ENCODE measurements at regions of chr11 and their contacts with region 1.

Region 1: GRCh38 chr11:11977206-11977938 is 31.1 kb downstream of the DKK3 start:
- DNase-seq: peak; percentile 80 to 84 (median 82)
- ATAC-seq: peak; percentile 14 to 48 (median 29)
- H3K4me3 ChIP-seq: no peak overlapping the region
- H3K27ac ChIP-seq: peak overlapping the region; percentile 61 to 97 (median 88)
- H3K4me1 ChIP-seq: peaks cover 29 to 100% (median 96%) of the 10 kb centered on the region in 12 donors
- H3K27me3 ChIP-seq: no peaks in the 10 kb centered on the region
- CTCF ChIP-seq: no peak
- POLR2A ChIP-seq: no peak

Region 2: DNA sequence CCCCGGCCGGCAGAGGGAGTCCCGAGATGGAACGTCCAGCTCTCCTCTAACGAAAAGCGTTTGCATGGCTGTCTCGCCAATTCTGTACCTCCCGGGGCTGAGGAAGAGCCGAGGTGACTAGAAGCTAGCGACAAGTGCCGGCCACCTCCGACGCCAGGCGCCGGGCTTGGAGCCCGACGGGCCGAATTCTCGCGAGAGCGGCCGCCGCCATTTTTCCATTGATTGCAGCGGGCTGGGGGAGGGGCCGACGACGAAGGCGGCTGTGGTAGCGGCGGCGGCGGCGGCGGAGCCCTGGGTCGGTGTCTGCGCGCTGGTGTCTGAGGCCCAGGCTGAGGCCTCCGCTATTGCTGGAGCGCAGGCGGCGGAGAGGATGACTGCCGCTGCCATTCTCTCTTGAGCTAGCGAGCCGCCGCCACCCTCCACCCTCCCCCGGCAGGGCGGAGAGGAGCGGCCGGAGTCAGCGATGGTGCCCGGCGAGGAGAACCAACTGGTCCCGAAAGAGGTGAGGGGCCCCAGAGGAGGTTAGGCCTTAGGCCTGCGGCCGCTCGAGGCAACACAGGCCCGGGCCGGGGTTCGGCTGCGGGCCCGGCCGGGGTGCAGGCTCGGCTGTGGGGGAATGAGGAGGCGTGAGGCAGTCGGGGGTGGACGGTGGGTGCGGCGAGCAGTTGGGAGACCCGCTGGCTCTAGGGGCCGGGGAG is 135.5 kb before region 1 on chr11 and contains the start of gene USP47:
- intact Hi-C with region 1: loop called in 1 of 10 experiments (anchors 5 kb)
- DNase-seq: peak; percentile 93 to 96 (median 95)
- ATAC-seq: peak; percentile 78 to 93 (median 92)
- H3K4me3 ChIP-seq: peak within 1 kb of the TSS; percentile 54 to 86 (median 77)
- H3K27ac ChIP-seq: peak within 1 kb of the TSS; percentile 87 to 99 (median 96)
- H3K4me1 ChIP-seq: peaks cover 0 to 51% (median 36%) of the 10 kb centered on the region in 12 donors
- H3K27me3 ChIP-seq: no peaks in the 10 kb centered on the region
- CTCF ChIP-seq: peak in 11 of 12 donors; percentile 33 to 77 (median 57)
- POLR2A ChIP-seq: peak in 1 of 2 donors; percentile 82
- total RNA-seq, gene USP47: 42.3 to 89.6 (median 54.3) TPM

Region 3: GRCh38 chr11:11946180-11946579 is 31.2 kb before region 1 on chr11:
- intact Hi-C with region 1: no loop called
- DNase-seq: no peak
- ATAC-seq: no peak
- H3K4me3 ChIP-seq: no peak overlapping the region
- H3K27ac ChIP-seq: peak overlapping the region in 11 of 12 donors; percentile 0 to 64 (median 44)
- H3K4me1 ChIP-seq: peaks cover 0 to 37% (median 5%) of the 10 kb centered on the region in 12 donors
- H3K27me3 ChIP-seq: no peaks in the 10 kb centered on the region
- CTCF ChIP-seq: no peak
- POLR2A ChIP-seq: no peak

Region 4: GRCh38 chr11:11993839-11994238 is 16.5 kb after region 1 on chr11:
- intact Hi-C with region 1: loop called in 2 of 10 experiments (anchors 2 kb)
- DNase-seq: peak in 3 of 5 donors; percentile 51 to 81 (median 69)
- ATAC-seq: peak; percentile 80 to 91 (median 86)
- H3K4me3 ChIP-seq: no peak overlapping the region
- H3K27ac ChIP-seq: peak overlapping the region; percentile 55 to 84 (median 76)
- H3K4me1 ChIP-seq: peaks cover 0 to 48% (median 26%) of the 10 kb centered on the region in 12 donors
- H3K27me3 ChIP-seq: no peaks in the 10 kb centered on the region
- CTCF ChIP-seq: no peak
- POLR2A ChIP-seq: no peak

Region 5: DNA sequence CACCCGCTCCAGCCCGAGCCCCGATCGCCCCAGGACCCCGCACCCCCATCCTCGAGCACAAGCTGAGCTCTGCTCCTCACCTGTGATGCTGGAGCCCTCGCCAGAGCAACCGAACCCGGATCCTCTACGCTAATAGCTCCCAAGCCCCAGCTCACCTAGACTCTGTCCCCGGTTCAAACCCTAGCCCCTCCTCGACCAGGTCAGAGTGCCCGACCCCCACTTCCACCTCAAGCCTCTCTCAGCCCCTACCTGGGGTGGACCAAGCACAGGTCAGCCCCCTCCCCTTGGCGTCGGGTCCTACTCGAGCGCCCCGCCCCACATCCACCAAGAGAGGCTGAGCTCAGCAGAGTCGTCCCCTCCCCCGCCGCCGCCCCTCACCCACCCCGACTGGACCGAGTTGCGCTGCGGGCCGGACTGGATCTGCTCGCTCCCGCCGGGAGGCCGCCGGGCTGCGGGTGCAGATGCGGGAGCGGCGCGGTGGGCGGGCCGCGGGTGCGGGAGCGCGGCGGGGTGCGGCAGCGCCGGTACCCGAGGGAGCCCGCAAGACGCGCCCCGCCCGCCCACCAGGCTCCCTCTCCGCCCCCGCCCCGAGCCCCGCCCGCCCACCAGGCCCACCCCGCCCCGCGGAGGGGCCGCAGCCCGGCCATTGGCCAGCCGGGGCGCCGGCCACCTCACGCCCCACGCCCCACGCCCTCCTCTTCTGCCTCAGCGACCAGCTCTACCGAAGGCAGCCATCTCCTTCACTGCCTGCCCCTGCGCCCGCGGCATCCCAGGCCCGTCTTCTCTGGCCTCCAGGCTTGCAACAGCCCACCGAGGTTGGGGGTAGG is 31.6 kb after region 1 on chr11:
- intact Hi-C with region 1: loop called in 3 of 10 experiments (anchors 5 kb)
- DNase-seq: peak; percentile 60 to 81 (median 69)
- ATAC-seq: peak; percentile 69 to 82 (median 74)
- H3K4me3 ChIP-seq: peak overlapping the region; percentile 54 to 89 (median 72)
- H3K27ac ChIP-seq: peak overlapping the region; percentile 12 to 89 (median 82)
- H3K4me1 ChIP-seq: peaks cover 0 to 52% (median 29%) of the 10 kb centered on the region in 12 donors
- H3K27me3 ChIP-seq: peaks cover 0 to 51% (median 0%) of the 10 kb centered on the region in 9 donors
- CTCF ChIP-seq: no peak
- POLR2A ChIP-seq: no peak

Region 6: DNA sequence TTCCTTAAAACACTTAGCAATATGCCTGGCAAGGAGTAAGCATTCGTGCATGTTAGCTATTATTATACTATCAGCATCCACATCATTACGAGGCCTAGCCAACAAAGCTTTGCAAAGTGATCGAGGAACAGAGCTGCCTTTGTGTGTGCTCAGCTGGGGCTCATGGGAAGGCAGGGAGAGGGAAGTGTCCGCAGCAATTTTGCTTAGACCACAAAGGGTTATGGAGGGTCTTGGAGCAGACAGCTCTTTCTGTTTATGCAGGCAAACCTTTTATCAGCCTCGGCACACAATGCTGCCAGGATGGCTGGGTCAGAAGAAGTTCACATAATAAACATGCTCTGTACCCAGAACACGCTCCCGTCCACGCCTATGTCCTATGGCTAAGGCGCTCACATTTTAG is 42.0 kb after region 1 on chr11:
- intact Hi-C with region 1: loop called in 3 of 10 experiments (anchors 5 kb)
- DNase-seq: peak in 2 of 5 donors; percentile 36 to 44
- ATAC-seq: peak; percentile 44 to 63 (median 51)
- H3K4me3 ChIP-seq: no peak overlapping the region
- H3K27ac ChIP-seq: peak overlapping the region; percentile 10 to 95 (median 76)
- H3K4me1 ChIP-seq: peaks cover 0 to 45% (median 27%) of the 10 kb centered on the region in 12 donors
- H3K27me3 ChIP-seq: no peaks in the 10 kb centered on the region
- CTCF ChIP-seq: no peak
- POLR2A ChIP-seq: no peak

Region 7: DNA sequence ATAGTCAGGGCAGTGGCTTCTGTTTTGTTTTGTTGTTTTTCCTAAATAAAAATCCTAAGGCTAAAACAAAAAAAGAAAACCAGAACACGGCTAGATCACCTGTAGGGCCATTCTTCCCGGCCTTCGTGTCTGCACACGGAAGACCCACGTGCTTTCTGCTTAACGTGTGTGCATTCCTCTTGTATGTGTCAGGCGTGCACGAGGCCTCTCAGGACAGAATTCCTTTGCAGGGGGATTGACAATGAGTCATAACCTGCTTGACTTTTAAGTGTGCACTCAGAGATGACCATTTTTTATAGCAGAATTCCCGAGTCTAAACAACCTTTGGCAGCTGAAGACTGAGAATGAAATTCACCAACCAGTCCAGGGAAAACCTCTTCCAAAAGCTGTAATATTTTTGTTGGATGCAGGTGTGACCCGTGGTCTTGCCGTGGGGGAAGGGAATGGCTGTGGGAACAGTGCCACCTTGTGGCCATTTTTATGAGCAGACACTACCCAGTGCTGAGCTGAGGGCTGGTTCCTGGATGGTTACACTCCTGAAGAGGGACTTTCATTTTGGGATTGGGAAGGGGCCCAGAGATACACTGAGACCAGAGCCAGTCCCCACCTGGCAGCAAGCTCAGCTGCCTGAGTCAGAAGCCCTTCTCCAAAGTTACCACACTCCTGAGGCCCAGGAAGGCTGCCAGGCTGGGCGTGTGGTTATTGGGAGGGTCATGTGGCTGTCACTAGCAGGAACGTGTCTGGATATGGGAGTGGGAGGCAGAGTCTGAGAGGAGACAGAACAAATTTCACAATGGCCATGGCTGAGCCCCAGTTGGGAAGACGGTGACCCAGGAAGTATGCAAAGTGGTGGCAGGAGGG is 66.8 kb after region 1 on chr11:
- intact Hi-C with region 1: loop called in 2 of 10 experiments (anchors 5 to 10 kb)
- DNase-seq: peak; percentile 80 to 88 (median 81)
- ATAC-seq: peak; percentile 82 to 90 (median 88)
- H3K4me3 ChIP-seq: peak overlapping the region in 3 of 12 donors; percentile 3 to 12 (median 8)
- H3K27ac ChIP-seq: peak overlapping the region in 11 of 12 donors; percentile 31 to 78 (median 66)
- H3K4me1 ChIP-seq: peaks cover 0 to 23% (median 17%) of the 10 kb centered on the region in 12 donors
- H3K27me3 ChIP-seq: no peaks in the 10 kb centered on the region
- CTCF ChIP-seq: peak; percentile 89 to 98 (median 93)
- POLR2A ChIP-seq: no peak